HepG2 (cell line): ENCODE measurements at regions of chr20 and their contacts with region 1.

Region 1: GRCh38 chr20:5197847-5198650 is 71.2 kb downstream of the CDS2 start:
- DNase-seq: no peak
- ATAC-seq: no peak
- H3K4me3 ChIP-seq: no peak overlapping the region
- H3K27ac ChIP-seq: no peak overlapping the region
- H3K4me1 ChIP-seq: peaks cover 13% of the 10 kb centered on the region
- H3K27me3 ChIP-seq: no peaks in the 10 kb centered on the region
- CTCF ChIP-seq: no peak
- EP300 ChIP-seq: no peak
- POLR2A ChIP-seq: no peak
- RAD21 ChIP-seq: no peak

Region 2: GRCh38 chr20:5181956-5182355 is 16.1 kb before region 1 on chr20:
- CTCF ChIA-PET with region 1: no interaction called
- POLR2A ChIA-PET with region 1: no interaction called
- in situ Hi-C with region 1: no loop called
- intact Hi-C with region 1: loop called (anchors 1 kb)
- DNase-seq: no peak
- ATAC-seq: no peak
- H3K4me3 ChIP-seq: no peak overlapping the region
- H3K27ac ChIP-seq: no peak overlapping the region
- H3K4me1 ChIP-seq: peaks cover 27% of the 10 kb centered on the region
- H3K27me3 ChIP-seq: no peaks in the 10 kb centered on the region
- CTCF ChIP-seq: no peak
- EP300 ChIP-seq: no peak
- POLR2A ChIP-seq: no peak
- RAD21 ChIP-seq: no peak